ENCODE measurements at regions of chr3 and their contacts with region 1.

Region 1: DNA sequence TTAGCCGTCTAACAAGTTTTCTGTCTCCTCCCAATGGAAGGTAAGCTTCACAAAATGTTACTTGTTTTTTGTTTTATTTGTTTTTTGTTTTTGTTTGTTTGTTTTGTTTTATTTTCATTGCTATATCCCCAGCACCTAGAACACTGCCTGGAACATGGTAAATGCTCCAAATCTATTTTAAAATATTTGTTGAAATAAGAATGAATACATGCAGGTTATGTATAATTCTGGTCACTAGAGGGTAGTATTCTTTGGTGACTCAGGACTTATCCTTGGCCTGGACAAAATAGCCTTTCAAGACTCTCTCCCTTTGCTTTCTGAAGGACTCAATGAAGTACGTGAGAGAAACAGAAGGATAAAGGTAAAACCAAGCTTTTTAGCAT is 47.0 kb upstream of the PPP2R3A start:
- DNase-seq: no peak
- H3K4me3 ChIP-seq: no peak overlapping the region
- H3K27ac ChIP-seq: no peak overlapping the region
- H3K27me3 ChIP-seq: no peaks in the 10 kb centered on the region
- CTCF ChIP-seq: peak; percentile 21 to 82 (median 61)

Region 2: GRCh38 chr3:136042608-136043221 is 124.1 kb after region 1 on chr3:
- intact Hi-C with region 1: loop called (anchors 1 to 5 kb)
- DNase-seq: no peak
- H3K4me3 ChIP-seq: no peak overlapping the region
- H3K27ac ChIP-seq: peak overlapping the region in 1 of 59 donors; percentile 2
- H3K27me3 ChIP-seq: no peaks in the 10 kb centered on the region
- CTCF ChIP-seq: peak; percentile 57 to 90 (median 75)